Gastrocnemius medialis (tissue), 4 donors: ENCODE measurements at regions of chr16 and their contacts with region 1.

Region 1: DNA sequence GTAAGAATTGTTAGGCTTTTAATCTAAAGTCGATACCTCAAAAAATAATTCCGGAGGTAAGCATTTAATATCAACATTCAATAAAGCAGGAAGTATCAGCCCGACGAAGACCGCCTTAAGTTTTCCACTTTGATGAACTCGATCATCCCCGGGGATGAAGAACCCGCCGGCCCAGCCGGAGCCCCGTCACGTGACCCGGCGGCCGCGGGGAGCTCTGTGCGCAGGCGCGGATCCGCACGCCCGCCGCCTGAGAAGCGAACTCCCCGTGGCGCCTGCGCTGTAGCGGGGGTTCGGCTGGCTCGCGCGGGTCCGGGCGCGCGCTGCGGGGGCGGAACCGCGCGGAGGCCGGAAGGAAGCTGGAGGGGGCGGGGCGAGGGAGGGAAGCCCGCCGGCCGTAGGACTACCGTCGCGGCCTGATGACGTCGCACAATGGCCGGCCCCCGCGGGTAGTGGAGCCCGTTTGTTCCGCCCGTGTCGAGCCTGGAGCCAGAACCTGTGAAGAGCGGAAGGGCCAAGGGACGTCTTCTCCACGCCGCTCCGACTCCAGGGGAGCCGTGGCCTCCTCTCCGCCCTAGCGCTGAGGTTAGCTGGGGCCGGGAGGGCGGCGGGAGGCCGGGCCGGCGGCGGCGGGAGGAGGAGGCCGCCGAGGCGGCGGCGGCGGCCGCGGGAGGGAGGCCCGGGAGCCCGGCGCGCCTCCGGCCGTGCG is at the start of gene ZC3H18:
- DNase-seq: peak; percentile 92 to 94
- ATAC-seq: peak; percentile 94 to 96
- H3K4me3 ChIP-seq: peak within 1 kb of the TSS; percentile 78 to 93 (median 90)
- H3K27ac ChIP-seq: peak within 1 kb of the TSS; percentile 84 to 90 (median 88)
- H3K4me1 ChIP-seq: peaks cover 22 to 29% of the 10 kb centered on the region in 2 donors
- H3K27me3 ChIP-seq: no peaks in the 10 kb centered on the region
- CTCF ChIP-seq: peak in 3 of 5 experiments; percentile 0 to 37 (median 36)
- POLR2A ChIP-seq: peak; percentile 58 to 65
- total RNA-seq, gene ZC3H18: 10.9 to 20.5 (median 18.4) TPM

Region 2: DNA sequence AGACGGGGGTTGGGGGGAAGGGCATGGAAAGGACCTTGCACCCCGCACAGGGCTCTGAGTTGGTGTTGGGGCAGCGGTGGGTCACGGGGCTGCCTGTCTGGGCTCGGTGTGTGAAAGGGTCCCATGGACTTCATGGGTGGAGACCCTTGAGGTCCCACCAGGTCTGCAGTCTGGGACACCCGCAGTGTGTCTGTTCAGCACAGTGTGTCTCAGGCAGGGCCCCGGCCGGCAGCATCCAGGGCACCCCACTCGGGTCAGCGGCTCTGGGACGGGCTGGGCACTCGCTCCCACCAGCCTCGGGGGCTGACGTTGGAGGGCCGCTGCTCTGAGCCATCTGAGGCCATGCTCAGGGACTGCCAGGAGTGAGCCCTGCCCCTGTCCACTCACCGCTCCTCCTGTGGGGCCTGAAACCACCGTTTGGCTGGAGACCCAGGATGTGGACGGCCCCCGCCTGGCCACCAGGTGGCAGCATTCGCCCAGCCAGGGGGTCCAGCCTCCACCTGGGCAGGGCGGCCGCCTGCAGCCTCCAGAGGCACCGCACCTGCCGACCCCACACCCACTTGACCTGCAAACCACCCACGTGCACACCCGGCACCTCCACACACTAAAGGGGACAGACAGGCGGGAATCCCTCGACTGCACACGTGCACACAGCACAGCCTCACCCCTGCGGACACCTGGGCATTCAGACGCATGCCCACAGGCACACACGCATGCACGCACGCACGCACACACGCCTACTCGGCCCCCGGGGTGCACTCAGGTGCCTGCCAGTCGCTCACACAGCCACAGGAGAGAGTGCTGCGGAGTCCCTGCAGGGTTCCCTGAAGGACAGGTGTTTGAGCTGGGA is 127.2 kb before region 1 on chr16:
- in situ Hi-C with region 1: loop called in 1 of 4 experiments (anchors 25 kb)
- intact Hi-C with region 1: no loop called
- DNase-seq: peak; percentile 47 to 54
- ATAC-seq: peak; percentile 73 to 87
- H3K4me3 ChIP-seq: no peak overlapping the region
- H3K27ac ChIP-seq: no peak overlapping the region
- H3K4me1 ChIP-seq: no peaks in the 10 kb centered on the region
- H3K27me3 ChIP-seq: no peaks in the 10 kb centered on the region
- CTCF ChIP-seq: peak; percentile 93 to 98 (median 96)
- POLR2A ChIP-seq: no peak

Region 3: GRCh38 chr16:88477631-88478514 is 92.3 kb before region 1 on chr16:
- in situ Hi-C with region 1: no loop called
- intact Hi-C with region 1: no loop called
- DNase-seq: no peak
- ATAC-seq: no peak
- H3K4me3 ChIP-seq: no peak overlapping the region
- H3K27ac ChIP-seq: no peak overlapping the region
- H3K4me1 ChIP-seq: no peaks in the 10 kb centered on the region
- H3K27me3 ChIP-seq: peaks cover 0 to 19% (median 8%) of the 10 kb centered on the region in 3 donors
- CTCF ChIP-seq: no peak
- POLR2A ChIP-seq: no peak

Region 4: GRCh38 chr16:88662843-88663606 is 92.9 kb after region 1 on chr16 and contains the start of gene MVD:
- in situ Hi-C with region 1: no loop called
- intact Hi-C with region 1: loop called (anchors 5 kb)
- DNase-seq: peak; percentile 97
- ATAC-seq: peak; percentile 96 to 98
- H3K4me3 ChIP-seq: peak within 1 kb of the TSS; percentile 74 to 98 (median 82)
- H3K27ac ChIP-seq: peak within 1 kb of the TSS; percentile 86 to 90 (median 90)
- H3K4me1 ChIP-seq: peaks cover 15 to 23% of the 10 kb centered on the region in 2 donors
- H3K27me3 ChIP-seq: no peaks in the 10 kb centered on the region
- CTCF ChIP-seq: no peak
- POLR2A ChIP-seq: peak; percentile 90 to 92
- total RNA-seq, gene MVD: 9.0 to 16.3 (median 13.4) TPM

Region 5: GRCh38 chr16:89217388-89218191 is 647.5 kb after region 1 on chr16 and contains the start of gene ZNF778:
- in situ Hi-C with region 1: no loop called
- intact Hi-C with region 1: loop called (anchors 1 kb)
- DNase-seq: peak; percentile 73 to 79
- ATAC-seq: peak; percentile 82 to 87
- H3K4me3 ChIP-seq: peak within 1 kb of the TSS; percentile 84 to 98 (median 92)
- H3K27ac ChIP-seq: peak within 1 kb of the TSS; percentile 95 to 100 (median 98)
- H3K4me1 ChIP-seq: peaks cover 25% of the 10 kb centered on the region in 2 donors
- H3K27me3 ChIP-seq: no peaks in the 10 kb centered on the region
- CTCF ChIP-seq: peak in 1 of 5 experiments; percentile 24
- POLR2A ChIP-seq: peak; percentile 94 to 97
- total RNA-seq, gene ZNF778: 10.7 to 21.3 (median 17.9) TPM